Activated CD4-positive, alpha-beta T cell treated with anti-CD3 and anti-CD28 coated beads, Interleukin-2, amount 10 ng/mL, durations not matched to agents 7 days and 5 days (primary cell): ENCODE measurements at regions of chr15 and their contacts with region 1.

Region 1: GRCh38 chr15:65818927-65819562 is 27.0 kb upstream of the DENND4A start:
- DNase-seq: peak; percentile 51
- H3K4me3 Mint-ChIP-seq: peak overlapping the region; percentile 57
- H3K27ac Mint-ChIP-seq: peak overlapping the region; percentile 86
- H3K4me1 Mint-ChIP-seq: peaks cover 60% of the 10 kb centered on the region
- H3K27me3 Mint-ChIP-seq: no peaks in the 10 kb centered on the region

Region 2: DNA sequence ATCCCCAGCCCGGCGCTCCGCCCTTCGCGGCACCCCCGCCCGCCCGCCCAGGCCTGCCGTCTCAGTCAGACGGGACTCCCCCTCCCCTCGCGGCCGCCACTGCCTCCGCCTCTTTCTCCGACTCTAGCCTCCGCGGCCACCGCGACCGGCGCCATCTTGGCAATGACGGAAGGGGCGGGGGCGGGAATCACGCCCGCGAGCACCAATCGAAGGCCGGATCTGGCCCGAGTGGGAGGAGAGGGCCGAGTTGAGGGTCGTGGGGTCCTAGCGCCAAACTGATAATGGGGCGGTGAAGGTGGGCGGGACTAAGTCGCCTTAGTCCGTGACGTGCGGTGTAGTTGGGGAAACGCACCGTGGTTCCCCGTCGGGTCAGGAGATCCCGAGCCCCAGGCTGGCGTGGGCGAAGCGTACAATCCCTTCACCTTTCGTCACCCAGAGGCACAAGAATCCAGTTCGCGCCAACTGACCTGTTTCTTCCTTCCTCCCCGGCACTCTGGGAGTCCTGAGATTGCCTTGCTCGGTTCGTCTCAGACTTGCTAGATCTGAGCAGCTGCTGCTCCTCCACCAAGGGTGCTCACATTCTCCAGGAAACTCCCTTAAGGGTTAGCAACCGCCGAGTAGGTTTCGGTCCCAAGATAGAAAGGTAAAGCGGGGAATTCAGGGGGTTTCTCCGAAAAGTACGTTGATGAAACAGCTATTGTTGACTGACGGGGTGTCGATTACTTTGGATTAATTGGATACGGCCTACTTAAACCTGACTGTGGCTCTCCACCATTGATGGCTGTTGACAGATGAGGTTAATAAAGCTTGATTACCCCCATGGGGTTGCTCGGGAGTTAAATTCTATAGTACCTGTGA is 26.7 kb before region 1 on chr15 and contains the start of gene DENND4A:
- CTCF ChIA-PET with region 1: interaction called, 20 read pairs
- POLR2A ChIA-PET with region 1: interaction called, 5 read pairs
- DNase-seq: peak; percentile 98
- H3K4me3 Mint-ChIP-seq: peak within 1 kb of the TSS; percentile 89
- H3K27ac Mint-ChIP-seq: peak within 1 kb of the TSS; percentile 98
- H3K4me1 Mint-ChIP-seq: peaks cover 63% of the 10 kb centered on the region
- H3K27me3 Mint-ChIP-seq: no peaks in the 10 kb centered on the region
- total RNA-seq, gene DENND4A: 30.9 to 40.2 TPM

Region 3: GRCh38 chr15:65804252-65804931 is 14.7 kb before region 1 on chr15:
- CTCF ChIA-PET with region 1: interaction called, 16 read pairs
- POLR2A ChIA-PET with region 1: no interaction called
- DNase-seq: no peak
- H3K4me3 Mint-ChIP-seq: no peak overlapping the region
- H3K27ac Mint-ChIP-seq: no peak overlapping the region
- H3K4me1 Mint-ChIP-seq: peaks cover 34% of the 10 kb centered on the region
- H3K27me3 Mint-ChIP-seq: no peaks in the 10 kb centered on the region

Region 4: GRCh38 chr15:65896236-65896635 is 77.2 kb after region 1 on chr15:
- CTCF ChIA-PET with region 1: no interaction called
- POLR2A ChIA-PET with region 1: no interaction called
- DNase-seq: no peak
- H3K4me3 Mint-ChIP-seq: no peak overlapping the region
- H3K27ac Mint-ChIP-seq: no peak overlapping the region
- H3K4me1 Mint-ChIP-seq: peaks cover 12% of the 10 kb centered on the region
- H3K27me3 Mint-ChIP-seq: no peaks in the 10 kb centered on the region